Left cardiac atrium (tissue), 4 donors: ENCODE measurements at regions of chr2 and their contacts with region 1.

Region 1: DNA sequence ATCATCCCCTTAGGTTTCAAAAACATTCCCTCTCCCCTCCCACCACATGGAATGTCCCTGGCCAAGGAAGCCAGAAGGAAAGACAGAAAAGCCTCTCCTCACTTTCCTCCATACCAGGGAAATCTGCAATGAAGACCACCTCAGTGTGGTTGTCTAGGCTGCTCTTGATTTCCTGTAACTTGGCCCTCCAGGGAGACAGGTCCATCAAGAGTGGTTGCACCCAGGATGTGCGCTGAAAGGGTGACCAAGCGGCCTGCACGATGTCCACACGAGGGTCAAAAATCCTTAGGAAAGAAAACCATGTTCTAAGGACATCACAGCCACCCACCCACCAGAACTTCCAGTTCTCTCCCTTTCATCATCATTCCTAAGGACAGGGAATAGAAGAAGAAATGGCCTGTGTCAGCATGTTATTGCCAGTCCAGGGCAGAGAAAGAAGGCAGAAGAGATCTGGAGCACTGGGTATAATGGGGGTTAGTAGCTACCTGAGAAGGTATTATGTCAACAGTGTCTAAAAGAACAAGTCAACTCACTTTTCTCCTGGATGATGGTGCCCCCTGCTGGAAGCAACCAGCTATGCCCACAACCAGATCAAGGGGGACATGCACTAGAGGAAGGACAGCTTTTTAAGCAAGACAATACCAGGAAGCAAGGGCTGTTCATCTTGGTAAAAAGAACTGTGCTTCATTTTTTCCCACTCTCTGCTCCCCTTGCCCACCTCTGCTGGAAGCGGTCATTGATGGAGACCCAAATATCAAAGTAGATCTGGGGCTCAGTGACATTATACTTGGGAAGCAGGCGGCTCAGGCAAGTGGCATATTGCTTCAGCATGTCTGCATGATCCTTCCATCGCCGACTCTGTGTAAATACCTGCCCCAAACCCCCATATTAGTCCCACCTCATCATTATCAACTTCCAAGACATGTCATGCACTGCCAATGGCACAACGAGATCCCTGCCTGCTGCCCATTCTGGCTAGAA is 9.3 kb downstream of the GGCX start:
- DNase-seq: peak; percentile 71
- ATAC-seq: peak; percentile 51 to 70

Region 2: GRCh38 chr2:85420536-85421259 is 131.3 kb before region 1 on chr2:
- intact Hi-C with region 1: loop called (anchors 1 to 2 kb)
- DNase-seq: peak; percentile 92
- ATAC-seq: peak; percentile 77 to 78

Region 3: GRCh38 chr2:85504778-85505323 is 47.1 kb before region 1 on chr2:
- intact Hi-C with region 1: no loop called
- DNase-seq: peak; percentile 60
- ATAC-seq: peak; percentile 43 to 88